AG04450 (cell line): ENCODE measurements at regions of chr20 and their contacts with region 1.

Region 1: GRCh38 chr20:3679749-3680700 is 1.8 kb downstream of the ADAM33 start:
- DNase-seq: peak; percentile 27
- H3K4me3 ChIP-seq: peak overlapping the region; percentile 70
- H3K27ac ChIP-seq: peak overlapping the region; percentile 57
- H3K27me3 ChIP-seq: no peaks in the 10 kb centered on the region
- CTCF ChIP-seq: no peak

Region 2: DNA sequence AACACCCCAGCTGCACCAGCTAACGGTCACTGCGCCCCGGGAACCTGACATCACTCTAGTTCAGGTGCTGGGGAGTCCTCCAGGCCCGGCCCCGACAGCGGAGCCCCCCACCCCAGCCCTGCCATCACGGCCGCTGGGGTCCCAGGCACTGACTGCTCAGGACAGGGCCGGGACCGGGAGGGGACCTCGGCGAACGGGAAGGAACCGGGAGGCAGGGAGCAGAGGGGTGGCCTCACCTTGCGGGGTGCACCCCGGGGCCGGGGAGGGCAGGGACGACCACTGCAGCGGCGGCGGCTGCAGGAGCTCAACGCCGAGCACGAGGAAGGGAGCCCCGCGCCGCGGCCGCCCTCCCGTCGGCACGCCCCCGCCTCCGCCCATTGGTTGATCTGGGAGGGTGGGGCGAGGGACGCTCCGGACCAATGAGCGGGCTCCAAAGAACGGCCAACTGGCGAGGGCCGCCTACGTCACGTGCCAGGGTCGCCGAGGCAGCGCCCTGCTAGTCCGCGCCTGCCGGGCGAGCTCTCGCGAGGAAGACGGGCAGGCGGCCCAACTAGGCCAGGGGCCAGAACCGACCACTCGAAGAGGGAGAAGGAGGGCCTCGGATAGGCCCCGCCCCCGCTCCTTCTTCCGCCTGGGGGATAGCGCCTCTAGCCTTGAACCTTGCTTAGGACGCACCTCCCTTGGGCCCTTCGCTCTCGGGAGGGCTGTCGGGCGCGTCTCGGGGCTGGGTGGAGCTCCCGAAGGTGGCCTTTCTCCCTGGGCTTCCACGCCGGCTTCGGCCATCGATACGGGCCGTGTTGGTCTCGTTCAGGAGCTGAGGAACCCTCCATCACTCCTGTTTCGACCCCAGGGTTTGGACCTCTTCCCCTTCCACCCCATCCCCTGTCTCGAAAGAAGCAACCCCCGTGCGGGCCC is 87.7 kb after region 1 on chr20 and contains the start of gene ADISSP:
- CTCF ChIA-PET with region 1: interaction called, 13 read pairs
- POLR2A ChIA-PET with region 1: interaction called, 10 read pairs
- DNase-seq: peak; percentile 95
- H3K4me3 ChIP-seq: peak within 1 kb of the TSS; percentile 84
- H3K27ac ChIP-seq: peak within 1 kb of the TSS; percentile 90
- H3K27me3 ChIP-seq: no peaks in the 10 kb centered on the region
- CTCF ChIP-seq: peak; percentile 28; the same call in 1 of the 2 replicates
- polyA plus RNA-seq, gene ADISSP: 22.6 and 29.2 TPM in 2 replicates